Activated CD8-positive, alpha-beta T cell treated with anti-CD3 and anti-CD28 coated beads for 36 hours (primary cell): ENCODE measurements at regions of chr13 and their contacts with region 1.

Region 1: DNA sequence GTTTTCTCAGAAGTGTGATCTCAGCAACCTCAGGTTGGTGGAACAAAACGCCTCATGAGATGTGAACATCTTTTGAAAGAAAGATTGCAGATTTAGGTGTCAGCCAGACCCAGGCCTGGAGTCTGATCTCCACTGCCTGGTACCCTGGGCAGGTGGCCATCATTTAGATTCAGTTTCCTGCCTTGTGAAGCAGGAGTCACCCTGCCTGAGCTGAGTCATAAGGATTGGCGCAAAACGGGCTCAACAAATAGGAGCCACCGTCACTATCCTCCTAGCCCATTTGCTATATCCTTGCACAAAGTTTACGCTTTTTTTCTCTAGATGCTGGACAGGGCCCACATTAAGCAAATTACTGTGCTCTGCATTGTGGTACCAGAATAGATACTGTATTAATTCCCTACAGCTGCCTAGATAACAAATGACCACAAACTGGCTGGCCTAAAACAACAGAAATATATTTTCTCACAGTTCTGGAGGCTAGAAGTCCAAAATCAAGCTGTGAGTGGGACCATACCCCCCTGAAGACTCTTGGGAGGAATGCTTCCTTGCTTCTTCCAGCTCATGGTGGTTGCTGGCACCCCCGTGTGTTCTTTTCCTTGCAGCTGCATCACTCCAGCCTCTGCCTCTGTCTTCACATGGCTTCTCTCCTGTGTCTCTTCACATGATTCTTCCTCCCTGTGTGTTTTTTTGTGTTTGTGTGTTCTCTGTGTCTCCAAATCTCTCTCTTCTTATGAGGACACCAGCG is 38.2 kb downstream of the TNFSF11 start:
- DNase-seq: no peak
- ATAC-seq: no peak
- H3K4me3 Mint-ChIP-seq: no peak overlapping the region
- H3K27ac Mint-ChIP-seq: no peak overlapping the region
- H3K4me1 Mint-ChIP-seq: no peaks in the 10 kb centered on the region
- H3K27me3 Mint-ChIP-seq: peaks cover 3% of the 10 kb centered on the region
- CTCF ChIP-seq: no peak

Region 2: DNA sequence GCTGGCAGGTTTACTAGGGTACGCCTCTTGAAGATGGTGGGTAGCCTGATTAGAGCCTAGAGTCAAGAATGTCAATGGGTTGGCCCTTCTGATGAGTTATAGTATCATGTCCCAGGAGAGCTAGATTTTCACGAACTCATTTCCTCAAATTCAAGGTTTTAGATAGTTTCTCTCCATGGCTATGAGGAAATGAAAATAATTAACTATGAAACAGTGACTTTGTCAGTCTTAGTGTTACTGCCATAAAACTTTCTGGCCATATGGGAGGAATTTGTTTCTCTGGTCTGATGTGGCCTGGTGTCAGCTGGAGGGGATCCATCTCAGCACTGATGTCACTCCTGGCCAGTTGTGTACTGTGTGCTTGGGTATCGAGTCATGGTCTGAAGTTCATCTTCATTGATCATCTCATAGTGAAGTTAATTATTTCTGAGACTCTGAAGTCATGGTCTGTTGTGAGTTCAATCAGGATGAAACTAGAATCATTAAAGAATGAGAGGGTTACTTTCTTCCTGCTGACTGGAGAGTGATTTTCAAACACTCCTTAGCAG is 87.6 kb before region 1 on chr13:
- CTCF ChIA-PET with region 1: no interaction called
- POLR2A ChIA-PET with region 1: no interaction called
- intact Hi-C with region 1: no loop called
- DNase-seq: no peak
- ATAC-seq: no peak
- H3K4me3 Mint-ChIP-seq: no peak overlapping the region
- H3K27ac Mint-ChIP-seq: no peak overlapping the region
- H3K4me1 Mint-ChIP-seq: no peaks in the 10 kb centered on the region
- H3K27me3 Mint-ChIP-seq: no peaks in the 10 kb centered on the region
- CTCF ChIP-seq: no peak

Region 3: GRCh38 chr13:42594970-42595571 is 17.1 kb before region 1 on chr13:
- CTCF ChIA-PET with region 1: interaction called, 14 read pairs
- POLR2A ChIA-PET with region 1: no interaction called
- intact Hi-C with region 1: no loop called
- DNase-seq: peak; percentile 63
- ATAC-seq: peak; percentile 69
- H3K4me3 Mint-ChIP-seq: no peak overlapping the region
- H3K27ac Mint-ChIP-seq: no peak overlapping the region
- H3K4me1 Mint-ChIP-seq: peaks cover 3% of the 10 kb centered on the region
- H3K27me3 Mint-ChIP-seq: peaks cover 6% of the 10 kb centered on the region
- CTCF ChIP-seq: peak; percentile 89